PC-9 (cell line): ENCODE measurements at regions of chr7 and their contacts with region 1.

Region 1: DNA sequence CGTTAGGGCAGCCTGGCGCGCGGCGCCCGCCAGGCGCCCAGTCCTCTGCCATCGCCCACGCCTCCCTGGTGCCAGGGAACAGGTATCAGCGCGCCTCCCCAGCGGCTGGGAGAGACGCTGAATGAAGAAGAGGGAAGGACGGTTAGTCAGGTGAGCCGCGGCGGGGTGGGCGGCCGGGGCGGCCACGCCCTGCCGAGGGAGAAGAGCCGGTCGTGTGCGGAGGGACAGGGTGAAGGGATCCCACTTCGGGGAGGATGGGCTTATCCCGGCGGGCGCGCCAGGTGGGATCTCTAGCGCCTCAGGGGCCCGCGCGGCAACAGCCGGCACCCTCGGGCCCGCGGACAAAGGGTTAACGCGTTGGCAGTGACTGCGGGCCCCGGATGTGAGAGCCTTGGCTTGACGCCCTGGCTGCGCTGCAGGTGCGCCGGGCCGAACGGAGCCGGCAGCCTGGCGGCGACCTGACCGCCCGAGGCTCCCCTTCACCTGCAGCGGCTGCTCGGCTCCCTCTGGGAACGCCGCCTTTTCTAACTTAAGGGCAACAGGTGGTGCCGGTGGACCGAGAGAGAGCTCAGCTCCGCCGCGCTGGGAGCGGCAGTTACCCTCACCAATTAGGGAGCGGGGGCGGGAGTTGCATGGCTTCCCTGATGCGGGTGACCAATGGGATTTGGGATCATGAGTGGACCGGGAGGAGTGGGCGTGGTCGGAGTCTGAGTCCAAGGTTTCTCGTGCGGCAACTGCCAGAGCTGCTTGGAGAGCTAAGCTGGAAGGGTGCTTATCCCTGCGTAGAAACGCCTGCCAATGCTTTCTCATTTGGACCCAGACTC is at the start of gene ARL4A:
- DNase-seq: peak; percentile 97 to 100
- H3K4me3 ChIP-seq: peak within 1 kb of the TSS; percentile 77
- H3K27ac ChIP-seq: peak within 1 kb of the TSS; percentile 63
- H3K4me1 ChIP-seq: peaks cover 15% of the 10 kb centered on the region; the same call in 1 of the 2 replicates
- H3K27me3 ChIP-seq: no peaks in the 10 kb centered on the region
- CTCF ChIP-seq: peak; percentile 56; the same call in 1 of the 2 replicates
- total RNA-seq, gene ARL4A: 17.9 and 18.0 TPM in 2 replicates

Region 2: DNA sequence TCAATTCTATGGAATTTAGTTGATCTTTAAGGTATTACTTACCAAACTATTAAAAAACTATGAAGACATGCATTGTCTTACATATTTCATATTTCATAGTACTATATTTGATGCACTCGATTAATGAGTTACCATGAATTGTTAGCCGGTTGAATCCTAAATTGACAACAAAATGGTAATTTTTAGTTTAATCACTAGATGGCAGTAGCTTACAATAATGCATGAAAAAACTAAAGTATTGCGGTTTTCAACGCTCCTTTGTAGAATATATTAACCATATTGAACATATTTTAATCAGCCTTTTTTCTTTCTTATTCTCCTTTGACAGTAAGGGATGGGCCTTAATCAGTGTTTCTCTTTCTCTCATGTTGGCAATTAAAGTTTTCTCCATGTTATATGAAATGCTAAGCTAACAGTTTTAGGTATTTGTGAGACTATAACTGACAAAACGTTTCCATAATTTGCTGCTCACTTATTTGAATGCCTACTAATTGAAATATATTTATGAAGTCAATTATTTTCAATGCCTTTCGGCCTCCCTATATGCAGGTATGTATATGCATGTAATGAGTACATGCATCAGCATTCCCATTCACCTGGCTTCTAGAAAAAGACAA is 48.1 kb before region 1 on chr7:
- CTCF ChIA-PET with region 1: interaction called, 11 read pairs
- POLR2A ChIA-PET with region 1: interaction called, 5 read pairs
- intact Hi-C with region 1: loop called (anchors 1 kb)
- DNase-seq: peak in 1 of 2 experiments; percentile 47
- H3K4me3 ChIP-seq: no peak overlapping the region
- H3K27ac ChIP-seq: no peak overlapping the region
- H3K4me1 ChIP-seq: no peaks in the 10 kb centered on the region
- H3K27me3 ChIP-seq: no peaks in the 10 kb centered on the region
- CTCF ChIP-seq: peak; percentile 88

Region 3: GRCh38 chr7:12706876-12707536 is 19.9 kb after region 1 on chr7:
- CTCF ChIA-PET with region 1: interaction called, 4 read pairs
- POLR2A ChIA-PET with region 1: interaction called, 3 read pairs
- intact Hi-C with region 1: loop called (anchors 2 kb)
- DNase-seq: no peak
- H3K4me3 ChIP-seq: no peak overlapping the region
- H3K27ac ChIP-seq: 0 out of 2 replicates have a peak overlapping the region, but pooled peaks have one; percentile 12
- H3K4me1 ChIP-seq: peaks cover 13% of the 10 kb centered on the region
- H3K27me3 ChIP-seq: no peaks in the 10 kb centered on the region
- CTCF ChIP-seq: no peak

Region 4: GRCh38 chr7:12895296-12895695 is 208.2 kb after region 1 on chr7:
- CTCF ChIA-PET with region 1: no interaction called
- POLR2A ChIA-PET with region 1: interaction called, 4 read pairs
- intact Hi-C with region 1: loop called (anchors 5 kb)
- DNase-seq: no peak
- H3K4me3 ChIP-seq: no peak overlapping the region
- H3K27ac ChIP-seq: no peak overlapping the region
- H3K4me1 ChIP-seq: no peaks in the 10 kb centered on the region
- H3K27me3 ChIP-seq: no peaks in the 10 kb centered on the region
- CTCF ChIP-seq: no peak

Region 5: GRCh38 chr7:13117103-13117502 is 430.0 kb after region 1 on chr7:
- CTCF ChIA-PET with region 1: no interaction called
- POLR2A ChIA-PET with region 1: no interaction called
- intact Hi-C with region 1: loop called (anchors 1 kb)
- DNase-seq: no peak
- H3K4me3 ChIP-seq: no peak overlapping the region
- H3K27ac ChIP-seq: no peak overlapping the region
- H3K4me1 ChIP-seq: no peaks in the 10 kb centered on the region
- H3K27me3 ChIP-seq: no peaks in the 10 kb centered on the region
- CTCF ChIP-seq: peak; percentile 62